GM10248 (cell line): ENCODE measurements at regions of chr17 and their contacts with region 1.

Region 1: GRCh38 chr17:37406635-37407461 is at the starts of genes ACACA and TADA2A:
- DNase-seq: peak; percentile 95
- CTCF ChIP-seq: no peak

Region 2: DNA sequence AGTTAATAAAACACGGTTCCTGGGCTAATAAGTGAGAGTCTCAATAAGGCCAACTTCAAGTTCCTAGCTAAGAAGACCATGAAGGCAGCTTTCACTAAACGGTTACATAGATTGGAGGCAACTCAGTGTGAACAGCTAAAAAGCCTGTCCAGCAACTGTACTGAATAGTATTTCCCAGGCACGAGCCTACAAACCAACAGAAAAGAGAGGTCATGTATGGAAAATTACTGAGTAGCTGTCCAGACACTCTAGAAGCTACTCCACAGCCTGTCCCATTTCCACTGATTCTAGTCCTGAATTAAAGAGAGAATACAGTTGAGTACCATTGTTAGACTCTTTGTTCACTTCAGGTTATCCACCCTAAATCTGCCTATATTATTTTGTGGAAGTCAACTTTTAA is 67.5 kb before region 1 on chr17:
- CTCF ChIA-PET with region 1: no interaction called
- POLR2A ChIA-PET with region 1: no interaction called
- DNase-seq: no peak
- CTCF ChIP-seq: no peak

Region 3: DNA sequence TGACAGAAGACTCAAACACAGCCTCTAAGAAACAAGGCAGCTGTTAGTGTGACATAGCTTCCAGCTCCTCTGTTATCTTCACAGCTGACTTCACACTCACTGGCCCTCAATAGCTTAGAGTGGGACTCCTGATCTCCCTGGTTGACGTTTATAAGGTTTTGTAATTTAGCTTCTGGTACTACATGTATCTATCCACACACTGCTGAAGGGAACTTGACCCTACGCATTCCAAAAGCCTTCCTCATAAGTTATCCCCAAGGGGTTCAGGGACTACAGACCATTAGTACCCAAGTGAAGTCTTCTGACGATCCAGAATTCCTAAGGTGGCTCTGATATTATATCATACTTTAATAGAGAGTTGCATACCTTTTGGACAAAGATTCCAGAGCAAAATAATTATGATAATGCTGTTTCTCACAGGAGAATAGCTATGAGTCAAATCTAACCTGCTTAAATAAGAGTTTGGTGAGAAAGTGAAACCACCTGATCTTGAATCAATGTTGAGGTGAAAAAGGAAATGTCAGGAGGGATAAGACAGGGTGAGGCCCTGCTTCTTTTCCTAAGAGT is 14.7 kb before region 1 on chr17:
- CTCF ChIA-PET with region 1: interaction called, 12 read pairs
- POLR2A ChIA-PET with region 1: interaction called, 3 read pairs
- DNase-seq: peak; percentile 62
- CTCF ChIP-seq: no peak